Left colon (tissue), 2 donors: ENCODE measurements at regions of chr6 and their contacts with region 1.

Region 1: GRCh38 chr6:18347826-18348225 is 39.3 kb upstream of the RNF144B start:
- DNase-seq: no peak
- ATAC-seq: no peak

Region 2: GRCh38 chr6:18314317-18314997 is 33.4 kb before region 1 on chr6:
- intact Hi-C with region 1: loop called in 1 of 2 experiments (anchors 2 kb)
- DNase-seq: no peak
- ATAC-seq: no peak